Calu3 (cell line): ENCODE measurements at regions of chr6 and their contacts with region 1.

Region 1: GRCh38 chr6:47047479-47048407 is 5.6 kb upstream of the ADGRF1 start:
- DNase-seq: peak; percentile 74
- H3K4me3 Mint-ChIP-seq: peak overlapping the region; percentile 9
- H3K27ac Mint-ChIP-seq: peak overlapping the region; percentile 81
- H3K4me1 Mint-ChIP-seq: peaks cover 54% of the 10 kb centered on the region
- H3K27me3 Mint-ChIP-seq: no peaks in the 10 kb centered on the region
- CTCF ChIP-seq: peak; percentile 43

Region 2: DNA sequence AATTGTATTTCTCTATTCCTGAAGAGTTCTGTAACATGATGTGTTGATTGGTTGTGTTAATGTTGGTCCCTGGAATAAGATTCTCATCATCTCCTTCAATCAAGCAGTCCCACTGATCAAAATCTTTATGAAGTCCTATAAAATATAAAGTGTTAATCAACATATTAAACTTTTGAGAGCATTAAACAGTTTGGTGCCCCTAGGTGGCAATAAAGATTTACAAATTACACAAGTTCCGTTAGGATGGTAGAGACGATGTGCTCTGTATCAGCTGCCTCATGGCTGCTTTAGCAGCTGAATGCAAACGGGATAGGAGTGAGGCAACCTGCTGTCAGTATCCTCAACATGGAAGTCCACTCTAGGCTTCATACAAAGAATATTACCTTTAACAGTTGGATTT is 343.2 kb before region 1 on chr6:
- CTCF ChIA-PET with region 1: interaction called, 4 read pairs
- intact Hi-C with region 1: loop called (anchors 2 kb)
- DNase-seq: peak; percentile 19
- H3K4me3 Mint-ChIP-seq: no peak overlapping the region
- H3K27ac Mint-ChIP-seq: no peak overlapping the region
- H3K4me1 Mint-ChIP-seq: no peaks in the 10 kb centered on the region
- H3K27me3 Mint-ChIP-seq: no peaks in the 10 kb centered on the region
- CTCF ChIP-seq: peak; percentile 34

Region 3: GRCh38 chr6:46925563-46926253 is 122.0 kb before region 1 on chr6:
- CTCF ChIA-PET with region 1: no interaction called
- intact Hi-C with region 1: loop called (anchors 5 kb)
- DNase-seq: peak; percentile 79
- H3K4me3 Mint-ChIP-seq: peak overlapping the region; percentile 19
- H3K27ac Mint-ChIP-seq: peak overlapping the region; percentile 88
- H3K4me1 Mint-ChIP-seq: peaks cover 64% of the 10 kb centered on the region
- H3K27me3 Mint-ChIP-seq: no peaks in the 10 kb centered on the region
- CTCF ChIP-seq: no peak

Region 4: DNA sequence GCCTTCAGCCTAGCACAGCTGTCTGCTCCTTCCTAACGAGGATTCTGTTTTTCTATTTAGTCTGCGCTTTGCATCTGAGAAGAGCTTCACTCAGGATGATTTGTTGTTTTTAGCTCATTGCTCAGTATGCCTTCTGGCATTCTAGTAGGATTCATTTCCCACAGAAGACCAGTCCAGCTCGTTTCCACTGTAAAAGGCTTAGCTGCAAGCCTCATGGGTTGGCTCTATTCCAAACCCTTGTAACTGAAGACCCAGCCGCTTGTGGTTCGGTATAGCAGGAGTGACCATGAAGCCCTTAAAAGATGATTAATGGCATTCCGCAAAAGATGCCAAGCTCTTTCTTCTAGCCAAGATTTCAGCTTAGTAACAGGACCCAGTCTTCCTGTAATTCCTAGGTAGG is 12.8 kb before region 1 on chr6:
- CTCF ChIA-PET with region 1: interaction called, 10 read pairs
- intact Hi-C with region 1: no loop called
- DNase-seq: peak; percentile 76
- H3K4me3 Mint-ChIP-seq: peak overlapping the region; percentile 61
- H3K27ac Mint-ChIP-seq: peak overlapping the region; percentile 29
- H3K4me1 Mint-ChIP-seq: peaks cover 64% of the 10 kb centered on the region
- H3K27me3 Mint-ChIP-seq: no peaks in the 10 kb centered on the region
- CTCF ChIP-seq: no peak

Region 5: GRCh38 chr6:47407348-47408281 is 359.9 kb after region 1 on chr6:
- CTCF ChIA-PET with region 1: interaction called, 3 read pairs
- intact Hi-C with region 1: loop called (anchors 5 kb)
- DNase-seq: no peak
- H3K4me3 Mint-ChIP-seq: peak overlapping the region; percentile 32
- H3K27ac Mint-ChIP-seq: peak overlapping the region; percentile 91
- H3K4me1 Mint-ChIP-seq: peaks cover 28% of the 10 kb centered on the region
- H3K27me3 Mint-ChIP-seq: no peaks in the 10 kb centered on the region
- CTCF ChIP-seq: no peak